Activated CD4-positive, alpha-beta T cell treated with anti-CD3 and anti-CD28 coated beads for 36 hours (primary cell): ENCODE measurements at regions of chr10 and their contacts with region 1.

Region 1: GRCh38 chr10:122879339-122880273 is at the start of gene FAM24B:
- DNase-seq: peak; percentile 96
- ATAC-seq: peak; percentile 90
- H3K4me3 Mint-ChIP-seq: peak within 1 kb of the TSS; percentile 92
- H3K27ac Mint-ChIP-seq: peak within 1 kb of the TSS; percentile 93
- H3K4me1 Mint-ChIP-seq: peaks cover 53% of the 10 kb centered on the region
- H3K27me3 Mint-ChIP-seq: no peaks in the 10 kb centered on the region
- total RNA-seq, gene FAM24B: 7.0 to 9.5 TPM

Region 2: GRCh38 chr10:123008439-123009205 is 129.0 kb after region 1 on chr10 and contains the starts of genes ACADSB and IKZF5:
- CTCF ChIA-PET with region 1: interaction called, 3 read pairs
- POLR2A ChIA-PET with region 1: no interaction called
- intact Hi-C with region 1: loop called (anchors 1 to 5 kb)
- DNase-seq: peak; percentile 98
- ATAC-seq: peak; percentile 87
- H3K4me3 Mint-ChIP-seq: peak within 1 kb of the TSS; percentile 95
- H3K27ac Mint-ChIP-seq: peak within 1 kb of the TSS; percentile 99
- H3K4me1 Mint-ChIP-seq: peaks cover 42% of the 10 kb centered on the region
- H3K27me3 Mint-ChIP-seq: no peaks in the 10 kb centered on the region
- total RNA-seq, gene ACADSB: 24.0 to 25.5 TPM
- total RNA-seq, gene IKZF5: 9.4 to 14.1 TPM